Activated CD4-positive, alpha-beta T cell treated with anti-CD3 and anti-CD28 coated beads, Interleukin-2, amount 10 ng/mL, durations not matched to agents 24 days and 14 days (primary cell): ENCODE measurements at regions of chr10 and their contacts with region 1.

Region 1: DNA sequence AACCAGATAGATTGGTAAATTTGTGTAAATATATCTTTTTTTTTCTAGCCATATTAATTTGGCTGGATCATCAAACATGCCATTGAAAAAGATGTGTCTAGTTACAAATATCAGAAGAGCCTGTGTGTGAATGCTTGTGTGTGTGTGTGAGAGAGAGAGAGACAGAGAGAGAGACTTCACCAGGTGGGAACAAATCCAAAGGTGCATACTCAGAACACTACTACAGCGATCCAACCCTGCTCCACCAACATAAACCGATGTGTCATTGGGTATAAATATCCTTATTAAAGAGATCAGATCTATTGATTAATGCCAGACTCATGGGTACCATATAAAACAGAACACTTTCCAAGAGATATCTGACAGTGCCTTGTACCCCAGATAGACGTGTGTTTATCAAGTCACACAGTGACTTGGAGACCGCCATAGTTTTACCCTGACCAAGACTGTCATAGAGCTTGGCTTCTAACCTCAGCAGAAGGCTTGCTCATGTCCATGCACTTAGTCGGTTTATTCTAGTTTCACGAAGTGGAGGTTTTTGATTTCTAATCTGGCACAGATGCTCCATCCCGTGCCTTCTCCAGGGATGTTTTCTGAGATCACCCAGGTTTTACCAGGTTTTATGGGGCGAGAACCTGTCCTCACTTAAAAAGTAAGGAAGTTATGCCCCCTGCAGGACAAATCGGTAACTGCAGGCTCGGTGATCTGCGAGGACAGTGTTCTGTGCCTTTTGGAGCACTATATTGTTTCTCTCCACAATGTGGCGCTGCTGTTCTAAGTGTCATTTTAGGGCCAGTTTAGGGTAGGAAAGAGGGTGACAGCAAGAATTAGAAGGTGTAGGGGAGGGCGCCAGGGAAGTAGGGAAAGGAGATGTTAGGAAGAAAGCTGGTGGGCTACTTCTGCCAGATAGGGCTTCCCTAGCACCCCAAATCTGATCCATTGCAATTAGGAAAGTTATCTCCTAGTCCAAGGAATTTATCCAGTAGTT is 29.3 kb upstream of the WNT8B start:
- DNase-seq: peak; percentile 99
- H3K4me3 Mint-ChIP-seq: no peak overlapping the region
- H3K27ac Mint-ChIP-seq: peak overlapping the region; percentile 17
- H3K4me1 Mint-ChIP-seq: peaks cover 12% of the 10 kb centered on the region
- H3K27me3 Mint-ChIP-seq: no peaks in the 10 kb centered on the region

Region 2: GRCh38 chr10:100338434-100339036 is 95.0 kb before region 1 on chr10:
- intact Hi-C with region 1: loop called (anchors 1 kb)
- DNase-seq: peak; percentile 95
- H3K4me3 Mint-ChIP-seq: no peak overlapping the region
- H3K27ac Mint-ChIP-seq: peak overlapping the region; percentile 27
- H3K4me1 Mint-ChIP-seq: peaks cover 24% of the 10 kb centered on the region
- H3K27me3 Mint-ChIP-seq: peaks cover 12% of the 10 kb centered on the region

Region 3: DNA sequence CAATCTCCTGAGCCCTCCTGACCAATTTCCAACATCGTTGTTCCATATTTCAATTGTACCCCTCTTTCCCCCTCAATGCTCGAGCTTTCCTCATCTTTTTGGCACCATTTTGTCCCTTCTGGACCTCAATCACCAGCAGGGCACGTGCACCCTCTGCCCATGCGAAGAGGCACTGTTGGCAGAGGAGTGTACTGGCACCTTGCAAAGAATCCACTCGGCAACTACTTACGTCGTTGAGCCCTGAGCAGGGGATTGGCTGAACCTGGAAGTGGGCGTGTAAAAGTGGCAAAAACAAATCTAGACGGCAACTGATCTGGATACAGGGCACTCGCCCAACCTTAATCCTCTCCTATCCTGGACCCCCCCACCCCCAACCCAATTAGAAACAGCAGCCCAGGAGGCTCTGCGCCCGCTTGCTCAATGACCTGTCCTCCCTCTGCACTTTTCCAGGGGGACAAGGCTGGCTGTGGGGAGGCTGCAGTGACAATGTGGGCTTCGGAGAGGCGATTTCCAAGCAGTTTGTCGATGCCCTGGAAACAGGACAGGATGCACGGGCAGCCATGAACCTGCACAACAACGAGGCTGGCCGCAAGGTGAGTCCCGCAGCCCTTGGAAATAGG is 48.0 kb after region 1 on chr10:
- intact Hi-C with region 1: loop called (anchors 1 kb)
- DNase-seq: peak; percentile 98
- H3K4me3 Mint-ChIP-seq: peak overlapping the region; percentile 86
- H3K27ac Mint-ChIP-seq: no peak overlapping the region
- H3K4me1 Mint-ChIP-seq: peaks cover 28% of the 10 kb centered on the region
- H3K27me3 Mint-ChIP-seq: peaks cover 3% of the 10 kb centered on the region